Ascending aorta (tissue), 2 donors: ENCODE measurements at regions of chr7 and their contacts with region 1.

Region 1: GRCh38 chr7:81659697-81660395 is 110.0 kb downstream of the HGF start:
- DNase-seq: no peak
- H3K4me3 ChIP-seq: no peak overlapping the region
- H3K27ac ChIP-seq: peak overlapping the region; percentile 14 to 32
- H3K4me1 ChIP-seq: peaks cover 0 to 2% of the 10 kb centered on the region in 2 donors
- H3K27me3 ChIP-seq: no peaks in the 10 kb centered on the region
- CTCF ChIP-seq: no peak

Region 2: DNA sequence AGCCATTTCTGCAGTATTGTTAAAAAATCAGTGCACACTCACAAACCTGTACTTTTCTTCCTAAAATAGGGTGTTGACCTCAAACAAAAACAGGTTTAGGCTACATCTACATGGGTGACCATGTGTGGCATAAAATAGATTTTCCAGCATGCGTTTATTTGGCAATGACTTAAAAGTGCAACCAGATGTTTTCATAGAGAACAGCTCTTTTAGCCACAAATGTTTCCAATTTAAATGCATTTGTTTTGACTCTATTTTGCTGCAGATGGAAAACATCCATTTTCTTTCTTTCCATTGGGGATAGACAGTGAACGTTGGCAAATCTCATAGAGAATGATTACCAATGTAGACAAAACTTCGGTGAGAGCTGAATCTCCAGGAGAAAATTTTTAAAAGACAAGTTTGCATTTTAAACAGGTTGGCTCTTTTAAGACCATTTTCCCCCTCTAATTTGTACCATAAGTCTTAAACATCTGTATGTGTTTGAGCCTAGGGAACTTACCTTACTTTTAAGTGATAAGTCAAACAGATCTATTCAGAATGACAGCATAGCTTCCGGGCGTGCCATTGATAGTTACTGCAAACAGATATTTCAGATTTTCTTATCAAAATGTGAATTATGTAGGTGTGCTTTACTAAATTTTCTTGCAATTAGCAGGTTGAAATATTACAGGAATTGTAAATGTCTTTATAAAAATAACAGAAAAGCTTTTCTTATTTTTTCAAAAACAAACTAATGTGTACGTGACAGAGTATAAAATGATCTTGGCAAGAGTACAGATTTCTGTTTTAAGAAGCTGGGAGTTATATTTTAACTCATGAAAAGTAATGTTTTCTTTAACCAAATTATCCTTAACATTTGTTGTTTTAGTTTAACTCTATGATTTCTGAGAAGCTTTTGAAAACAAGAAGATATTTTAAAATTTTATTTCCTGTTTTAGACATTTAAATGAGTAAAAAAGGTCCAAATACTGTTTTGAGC is 34.9 kb before region 1 on chr7:
- intact Hi-C with region 1: loop called (anchors 5 kb)
- DNase-seq: no peak
- H3K4me3 ChIP-seq: no peak overlapping the region
- H3K27ac ChIP-seq: no peak overlapping the region
- H3K4me1 ChIP-seq: peaks cover 0 to 8% of the 10 kb centered on the region in 2 donors
- H3K27me3 ChIP-seq: no peaks in the 10 kb centered on the region
- CTCF ChIP-seq: no peak

Region 3: DNA sequence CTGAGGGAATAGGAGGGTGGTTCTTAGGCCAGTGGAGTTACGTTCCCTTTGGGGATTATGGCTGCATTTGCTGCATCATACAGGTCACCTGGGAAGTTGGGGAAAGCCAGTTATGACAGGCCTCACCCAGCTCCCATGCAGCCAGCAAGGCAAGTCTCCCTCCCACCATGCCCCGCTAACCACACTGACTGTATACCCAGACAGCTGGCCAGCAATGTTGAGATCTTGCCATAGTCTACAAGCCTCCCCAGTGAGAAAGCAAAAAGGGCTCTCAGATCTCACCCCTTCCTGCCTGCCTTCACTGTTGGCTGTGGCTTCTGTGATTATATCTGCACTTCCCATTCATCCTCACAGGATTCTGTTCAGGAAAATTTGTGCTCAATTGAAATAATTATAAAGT is 243.3 kb after region 1 on chr7:
- intact Hi-C with region 1: no loop called
- DNase-seq: no peak
- H3K4me3 ChIP-seq: no peak overlapping the region
- H3K27ac ChIP-seq: no peak overlapping the region
- H3K4me1 ChIP-seq: no peaks in the 10 kb centered on the region
- H3K27me3 ChIP-seq: no peaks in the 10 kb centered on the region
- CTCF ChIP-seq: no peak

Region 4: GRCh38 chr7:82335927-82336326 is 676.1 kb after region 1 on chr7:
- intact Hi-C with region 1: no loop called
- DNase-seq: no peak
- H3K4me3 ChIP-seq: no peak overlapping the region
- H3K27ac ChIP-seq: no peak overlapping the region
- H3K4me1 ChIP-seq: no peaks in the 10 kb centered on the region
- H3K27me3 ChIP-seq: no peaks in the 10 kb centered on the region
- CTCF ChIP-seq: no peak